ENCODE measurements at regions of chr11 and their contacts with region 1.

Region 1: DNA sequence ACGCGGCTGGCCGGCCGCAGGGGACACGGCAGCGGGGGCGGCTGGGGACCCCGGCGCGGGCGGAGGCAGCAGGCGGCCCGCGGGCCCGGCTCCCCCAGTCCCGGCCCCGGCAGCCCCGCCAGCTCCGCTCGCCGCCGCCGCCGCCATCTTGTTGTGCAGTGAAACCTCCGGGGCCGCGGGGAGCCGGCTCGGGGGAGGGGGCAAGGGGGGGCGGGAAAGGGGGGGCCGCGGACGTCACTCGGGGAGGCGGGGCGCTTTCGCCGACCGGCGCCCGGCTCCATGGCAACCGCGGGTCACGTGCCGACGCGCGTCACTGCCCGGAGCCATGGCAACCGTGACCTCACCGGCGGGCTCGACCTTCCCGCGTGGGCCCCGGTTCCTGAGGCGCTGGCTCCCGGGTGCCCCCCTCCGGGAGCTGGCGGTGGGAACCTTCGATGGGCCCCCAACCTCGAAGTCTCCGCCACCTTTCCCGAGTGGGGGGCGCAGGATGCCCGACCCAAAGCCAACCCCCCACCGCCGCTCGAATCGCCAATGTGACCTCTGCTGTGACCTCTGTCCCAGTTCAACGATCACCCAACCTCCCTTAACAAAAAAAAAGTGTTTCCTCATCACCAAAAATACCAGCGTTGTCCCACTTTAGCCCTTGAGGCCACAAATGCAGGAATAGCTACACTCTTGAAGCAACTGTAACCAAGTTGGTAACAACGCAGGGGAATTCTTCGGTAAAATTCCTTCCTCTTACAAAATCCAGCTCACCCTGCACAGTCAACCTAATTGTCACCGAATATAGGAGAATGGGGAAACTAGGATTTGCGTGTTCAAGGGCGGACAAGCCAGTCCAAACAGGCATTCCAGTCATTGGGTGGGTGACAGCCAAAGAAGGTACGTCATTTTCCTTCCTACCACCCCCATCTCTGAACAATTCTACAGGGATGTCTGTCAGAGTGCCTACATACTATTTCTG is at the start of gene SIK3:
- DNase-seq: peak; percentile 95
- ATAC-seq: peak; percentile 71
- H3K4me3 Mint-ChIP-seq: peak within 1 kb of the TSS; percentile 93
- H3K27ac Mint-ChIP-seq: peak within 1 kb of the TSS; percentile 93
- H3K4me1 Mint-ChIP-seq: peaks cover 38% of the 10 kb centered on the region
- H3K27me3 Mint-ChIP-seq: no peaks in the 10 kb centered on the region
- total RNA-seq, gene SIK3: 44.7 to 45.8 TPM

Region 2: GRCh38 chr11:116853461-116854073 is 245.0 kb before region 1 on chr11:
- POLR2A ChIA-PET with region 1: interaction called, 31 read pairs
- DNase-seq: peak; percentile 50
- ATAC-seq: peak; percentile 96
- H3K4me3 Mint-ChIP-seq: peak overlapping the region; percentile 84
- H3K27ac Mint-ChIP-seq: peak overlapping the region; percentile 98
- H3K4me1 Mint-ChIP-seq: peaks cover 56% of the 10 kb centered on the region
- H3K27me3 Mint-ChIP-seq: no peaks in the 10 kb centered on the region

Region 3: DNA sequence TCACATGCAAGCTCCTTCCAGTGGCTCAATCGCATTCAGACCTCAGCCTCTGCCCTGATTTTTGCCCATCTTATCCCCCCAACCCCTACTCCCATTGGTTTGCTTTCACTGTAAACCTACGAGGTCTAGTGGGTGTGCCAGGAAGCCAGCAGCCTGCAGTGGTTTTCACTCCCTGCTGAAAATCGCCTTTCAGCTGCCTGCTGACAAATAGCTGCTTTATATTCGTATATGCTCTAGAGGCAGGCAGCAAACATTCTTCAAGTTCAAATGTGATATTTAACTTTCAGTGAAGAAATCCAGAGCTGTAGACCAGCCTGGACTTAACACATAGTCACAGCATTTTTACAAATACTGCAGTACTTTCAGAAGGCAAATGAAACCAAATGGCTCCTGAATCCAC is 168.4 kb before region 1 on chr11:
- POLR2A ChIA-PET with region 1: interaction called, 15 read pairs
- DNase-seq: peak; percentile 39
- ATAC-seq: peak; percentile 57
- H3K4me3 Mint-ChIP-seq: peak overlapping the region; percentile 82
- H3K27ac Mint-ChIP-seq: peak overlapping the region; percentile 83
- H3K4me1 Mint-ChIP-seq: peaks cover 54% of the 10 kb centered on the region
- H3K27me3 Mint-ChIP-seq: no peaks in the 10 kb centered on the region